ENCODE measurements at regions of chr16 and their contacts with region 1.

Region 1: GRCh38 chr16:55465077-55465896 is 13.7 kb upstream of the MMP2 start:
- DNase-seq: peak; percentile 72
- H3K4me3 ChIP-seq: peak overlapping the region; percentile 29; the same call in 1 of the 2 replicates
- H3K27ac ChIP-seq: no peak overlapping the region
- H3K27me3 ChIP-seq: no peaks in the 10 kb centered on the region
- CTCF ChIP-seq: peak; percentile 99

Region 2: DNA sequence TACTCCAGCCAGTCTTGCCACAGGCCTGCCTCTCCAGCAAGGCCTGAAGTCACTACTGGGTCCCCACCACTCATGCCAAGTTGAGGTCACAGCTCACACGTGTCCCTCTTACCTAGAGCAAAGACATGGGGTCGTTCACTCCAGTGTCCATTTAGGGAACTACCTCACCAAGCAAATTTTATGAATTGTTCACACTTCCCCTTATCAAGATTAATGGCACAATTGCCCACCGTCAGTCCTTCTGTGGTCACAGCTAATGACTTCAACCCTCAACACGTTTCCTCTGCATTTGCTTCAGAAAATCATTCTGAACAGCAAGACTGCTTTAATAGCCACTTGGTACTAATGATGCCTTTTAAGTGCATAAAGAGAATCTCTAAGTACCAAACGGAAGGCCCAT is 126.6 kb before region 1 on chr16:
- CTCF ChIA-PET with region 1: no interaction called
- POLR2A ChIA-PET with region 1: no interaction called
- DNase-seq: no peak
- H3K4me3 ChIP-seq: no peak overlapping the region
- H3K27ac ChIP-seq: no peak overlapping the region
- H3K27me3 ChIP-seq: no peaks in the 10 kb centered on the region
- CTCF ChIP-seq: no peak

Region 3: DNA sequence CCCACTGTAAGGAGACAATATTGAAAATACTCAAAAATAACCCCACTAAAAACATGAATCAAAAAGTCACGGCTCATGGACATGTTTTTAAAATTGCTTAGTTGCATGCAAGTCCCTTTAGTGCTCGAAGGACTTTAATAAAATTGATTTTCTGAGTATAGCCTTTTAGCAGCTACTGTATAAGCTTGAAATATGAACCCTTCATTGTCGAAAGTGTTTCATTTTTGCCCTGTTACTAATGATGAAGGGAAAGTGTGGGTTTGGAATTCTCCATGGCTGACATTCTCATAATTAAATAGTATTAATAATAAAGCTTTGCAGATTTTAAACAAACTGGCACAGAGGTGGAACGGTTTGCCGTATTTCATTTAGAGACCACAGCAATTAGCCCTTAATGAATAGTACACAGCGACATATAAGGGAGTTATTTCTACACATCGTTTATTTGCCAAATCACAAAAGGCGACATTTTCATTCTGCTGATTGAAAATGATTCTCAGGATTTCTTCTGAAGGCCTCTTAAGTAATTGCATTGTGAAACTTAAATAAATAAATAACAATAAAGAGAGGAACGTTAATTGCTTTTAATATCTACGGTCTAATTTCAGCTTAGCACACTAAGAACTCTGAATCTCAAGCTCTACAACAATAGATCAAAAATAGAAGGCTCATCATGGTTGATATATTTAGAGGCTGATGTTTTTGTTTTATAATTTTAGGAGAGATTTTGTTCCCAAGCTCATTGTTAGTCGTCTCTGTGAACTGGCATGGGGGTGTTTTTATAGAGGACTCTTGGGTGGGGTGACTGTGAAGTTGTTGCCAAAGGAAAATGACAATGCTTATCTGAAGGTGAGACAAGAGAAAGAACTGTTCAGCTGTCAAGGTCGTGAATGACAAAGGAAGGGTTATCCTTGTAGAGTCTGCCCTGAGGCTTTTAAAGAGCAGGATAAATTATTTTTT is 80.7 kb before region 1 on chr16:
- CTCF ChIA-PET with region 1: no interaction called
- POLR2A ChIA-PET with region 1: no interaction called
- DNase-seq: no peak
- H3K4me3 ChIP-seq: no peak overlapping the region
- H3K27ac ChIP-seq: no peak overlapping the region
- H3K27me3 ChIP-seq: no peaks in the 10 kb centered on the region
- CTCF ChIP-seq: no peak

Region 4: GRCh38 chr16:55398762-55399161 is 66.5 kb before region 1 on chr16:
- CTCF ChIA-PET with region 1: no interaction called
- POLR2A ChIA-PET with region 1: no interaction called
- DNase-seq: no peak
- H3K4me3 ChIP-seq: no peak overlapping the region
- H3K27ac ChIP-seq: no peak overlapping the region
- H3K27me3 ChIP-seq: peaks cover 2% of the 10 kb centered on the region
- CTCF ChIP-seq: no peak

Region 5: DNA sequence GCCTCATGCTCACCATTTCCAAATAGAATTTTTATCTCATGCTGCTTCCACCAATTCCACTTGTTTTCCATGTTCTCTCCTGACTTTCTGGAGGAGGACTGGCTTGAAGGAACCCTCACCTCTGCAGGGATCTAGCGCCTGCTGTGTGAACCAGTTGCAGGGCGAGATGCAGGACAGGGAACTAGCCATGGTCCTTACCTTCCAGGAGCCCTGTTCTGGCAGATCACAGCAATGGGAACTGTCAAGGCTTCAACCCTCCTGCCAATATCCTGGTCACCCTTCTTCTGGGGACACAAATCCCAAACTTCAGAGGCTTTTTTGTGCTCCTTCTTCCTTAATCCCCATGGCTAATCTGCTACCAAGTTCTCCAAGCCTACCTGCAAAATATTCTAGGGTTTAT is 46.7 kb before region 1 on chr16:
- CTCF ChIA-PET with region 1: no interaction called
- POLR2A ChIA-PET with region 1: no interaction called
- DNase-seq: no peak
- H3K4me3 ChIP-seq: no peak overlapping the region
- H3K27ac ChIP-seq: no peak overlapping the region
- H3K27me3 ChIP-seq: no peaks in the 10 kb centered on the region
- CTCF ChIP-seq: no peak

Region 6: GRCh38 chr16:55444754-55445485 is 20.4 kb before region 1 on chr16:
- CTCF ChIA-PET with region 1: interaction called, 14 read pairs
- POLR2A ChIA-PET with region 1: no interaction called
- DNase-seq: no peak
- H3K4me3 ChIP-seq: no peak overlapping the region
- H3K27ac ChIP-seq: no peak overlapping the region
- H3K27me3 ChIP-seq: no peaks in the 10 kb centered on the region
- CTCF ChIP-seq: no peak

Region 7: DNA sequence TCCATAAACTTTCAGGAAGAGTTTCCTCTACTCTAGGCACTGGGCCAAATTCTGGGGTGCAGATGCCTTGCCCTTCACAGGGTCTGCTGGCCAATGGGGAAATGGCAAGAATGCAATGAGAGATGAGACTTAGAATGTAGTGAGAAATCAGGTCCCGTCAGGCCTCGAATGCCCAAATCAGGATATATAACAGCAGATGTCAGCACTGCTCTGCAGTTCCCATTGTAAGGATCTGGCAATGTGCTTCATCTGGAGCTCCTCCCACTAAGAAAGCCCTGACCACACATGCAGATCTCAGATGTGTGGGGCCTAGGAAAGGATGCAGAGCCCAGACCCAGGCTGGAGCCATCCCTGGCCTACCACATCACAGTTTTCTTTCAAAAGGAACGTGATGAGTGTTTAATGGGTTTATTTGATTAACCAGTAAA is 29.7 kb after region 1 on chr16:
- CTCF ChIA-PET with region 1: interaction called, 76 read pairs
- POLR2A ChIA-PET with region 1: no interaction called
- DNase-seq: peak; percentile 87
- H3K4me3 ChIP-seq: no peak overlapping the region
- H3K27ac ChIP-seq: peak overlapping the region; percentile 73
- H3K27me3 ChIP-seq: no peaks in the 10 kb centered on the region
- CTCF ChIP-seq: peak; percentile 29; the same call in 1 of the 2 replicates

Region 8: GRCh38 chr16:55529018-55529417 is 63.7 kb after region 1 on chr16:
- CTCF ChIA-PET with region 1: interaction called, 195 read pairs
- POLR2A ChIA-PET with region 1: no interaction called
- DNase-seq: no peak
- H3K4me3 ChIP-seq: no peak overlapping the region
- H3K27ac ChIP-seq: no peak overlapping the region
- H3K27me3 ChIP-seq: no peaks in the 10 kb centered on the region
- CTCF ChIP-seq: no peak

Region 9: GRCh38 chr16:55567382-55567781 is 102.1 kb after region 1 on chr16:
- CTCF ChIA-PET with region 1: interaction called, 65 read pairs
- POLR2A ChIA-PET with region 1: no interaction called
- DNase-seq: no peak
- H3K4me3 ChIP-seq: no peak overlapping the region
- H3K27ac ChIP-seq: no peak overlapping the region
- H3K27me3 ChIP-seq: no peaks in the 10 kb centered on the region
- CTCF ChIP-seq: no peak

Region 10: DNA sequence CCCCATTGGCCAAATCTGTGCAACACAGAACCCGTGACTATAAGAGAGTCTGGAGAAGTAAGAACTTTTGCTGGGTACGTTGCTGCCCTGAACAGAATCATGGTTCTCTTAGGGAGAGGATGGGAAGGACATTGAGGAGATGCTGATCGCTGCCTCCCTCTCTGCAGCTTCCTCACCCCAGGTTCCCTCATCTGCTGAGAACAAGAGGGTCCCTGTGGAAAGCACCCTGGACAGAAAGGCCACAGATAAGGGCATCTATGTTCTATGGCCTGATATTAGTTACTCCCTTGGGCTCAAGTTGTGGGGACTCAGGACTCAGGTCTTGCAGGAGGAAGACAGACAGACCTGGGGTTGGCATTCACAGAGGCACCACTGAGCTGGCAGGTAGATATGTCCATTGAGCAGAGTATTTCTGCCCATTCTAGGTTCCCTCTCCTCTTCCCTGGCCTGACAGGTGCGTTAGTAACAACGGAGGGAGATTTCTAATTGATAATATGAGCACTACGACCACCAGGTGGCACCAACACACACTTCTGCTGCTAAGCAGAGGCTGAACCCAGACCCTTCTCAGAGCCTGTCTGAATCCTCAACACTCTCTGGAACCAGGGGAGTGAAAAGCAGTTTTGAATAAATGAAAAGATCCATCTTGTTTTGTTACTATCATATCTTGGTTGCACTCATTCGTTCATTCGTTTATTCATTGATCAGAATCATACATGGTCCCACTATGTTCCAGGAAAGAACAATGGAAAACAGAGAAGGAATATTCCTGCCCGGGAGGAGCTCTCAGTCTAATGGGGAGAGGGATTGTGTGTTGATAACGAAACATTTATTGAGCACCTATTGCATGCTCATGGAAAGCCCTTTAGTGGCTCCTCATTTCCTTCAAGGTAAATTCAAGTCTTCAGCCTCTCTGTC is 246.9 kb after region 1 on chr16:
- CTCF ChIA-PET with region 1: interaction called, 542 read pairs
- POLR2A ChIA-PET with region 1: no interaction called
- DNase-seq: peak; percentile 7
- H3K4me3 ChIP-seq: no peak overlapping the region
- H3K27ac ChIP-seq: no peak overlapping the region
- H3K27me3 ChIP-seq: no peaks in the 10 kb centered on the region
- CTCF ChIP-seq: peak; percentile 67